Endothelial cell of umbilical vein (primary cell): ENCODE measurements at regions of chr7 and their contacts with region 1.

Region 1: DNA sequence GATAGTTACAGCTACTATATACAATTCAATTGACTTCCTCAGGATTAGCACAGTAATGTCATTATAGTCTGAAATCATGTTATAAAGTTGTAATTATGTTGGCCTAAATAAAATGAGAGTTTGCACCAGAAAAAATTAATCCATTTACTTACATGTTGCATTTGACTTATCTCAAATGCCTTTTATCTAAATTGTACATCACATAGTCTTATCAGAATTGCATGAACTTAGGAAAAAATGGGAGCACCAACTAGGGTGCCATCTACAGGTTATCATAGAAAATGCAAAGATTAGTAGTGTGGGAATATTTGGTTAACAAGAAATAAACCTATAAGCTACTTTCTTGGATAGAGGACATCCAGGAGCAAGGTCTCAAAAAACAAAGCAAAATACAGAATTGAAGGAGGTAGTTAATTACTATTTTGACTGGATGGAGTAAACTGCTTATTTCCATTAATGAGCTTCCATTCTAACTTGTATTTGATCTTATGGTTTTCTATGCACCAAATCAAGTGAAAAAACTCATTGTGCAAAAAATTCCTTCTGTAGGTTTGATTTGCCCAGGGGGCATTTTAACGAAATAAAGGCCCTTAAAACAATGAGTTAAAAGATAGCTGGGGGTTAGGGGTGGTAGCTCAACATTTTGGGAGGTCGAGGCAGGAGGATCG is 60.0 kb upstream of the ORC5 start:
- DNase-seq: peak; percentile 28
- H3K4me3 ChIP-seq: no peak overlapping the region
- H3K27ac ChIP-seq: no peak overlapping the region
- H3K4me1 ChIP-seq: no peaks in the 10 kb centered on the region
- H3K27me3 ChIP-seq: peaks cover 0 to 3% of the 10 kb centered on the region in 2 experiments
- CTCF ChIP-seq: peak; percentile 16 to 32
- POLR2A ChIP-seq: no peak

Region 2: GRCh38 chr7:104106108-104106905 is 161.5 kb before region 1 on chr7:
- CTCF ChIA-PET with region 1: interaction called, 12 read pairs
- POLR2A ChIA-PET with region 1: no interaction called
- dilution Hi-C with region 1: no loop called
- intact Hi-C with region 1: no loop called
- DNase-seq: peak; percentile 15
- H3K4me3 ChIP-seq: no peak overlapping the region
- H3K27ac ChIP-seq: no peak overlapping the region
- H3K4me1 ChIP-seq: no peaks in the 10 kb centered on the region
- H3K27me3 ChIP-seq: peaks cover 0 to 1% of the 10 kb centered on the region in 2 experiments
- CTCF ChIP-seq: peak in 1 of 2 donors; percentile 6
- POLR2A ChIP-seq: no peak

Region 3: GRCh38 chr7:104225451-104225850 is 42.4 kb before region 1 on chr7:
- CTCF ChIA-PET with region 1: interaction called, 98 read pairs
- POLR2A ChIA-PET with region 1: no interaction called
- dilution Hi-C with region 1: no loop called
- intact Hi-C with region 1: no loop called
- DNase-seq: no peak
- H3K4me3 ChIP-seq: no peak overlapping the region
- H3K27ac ChIP-seq: no peak overlapping the region
- H3K4me1 ChIP-seq: peaks cover 8% of the 10 kb centered on the region
- H3K27me3 ChIP-seq: peaks cover 0 to 5% of the 10 kb centered on the region in 2 experiments
- CTCF ChIP-seq: no peak
- POLR2A ChIP-seq: no peak

Region 4: DNA sequence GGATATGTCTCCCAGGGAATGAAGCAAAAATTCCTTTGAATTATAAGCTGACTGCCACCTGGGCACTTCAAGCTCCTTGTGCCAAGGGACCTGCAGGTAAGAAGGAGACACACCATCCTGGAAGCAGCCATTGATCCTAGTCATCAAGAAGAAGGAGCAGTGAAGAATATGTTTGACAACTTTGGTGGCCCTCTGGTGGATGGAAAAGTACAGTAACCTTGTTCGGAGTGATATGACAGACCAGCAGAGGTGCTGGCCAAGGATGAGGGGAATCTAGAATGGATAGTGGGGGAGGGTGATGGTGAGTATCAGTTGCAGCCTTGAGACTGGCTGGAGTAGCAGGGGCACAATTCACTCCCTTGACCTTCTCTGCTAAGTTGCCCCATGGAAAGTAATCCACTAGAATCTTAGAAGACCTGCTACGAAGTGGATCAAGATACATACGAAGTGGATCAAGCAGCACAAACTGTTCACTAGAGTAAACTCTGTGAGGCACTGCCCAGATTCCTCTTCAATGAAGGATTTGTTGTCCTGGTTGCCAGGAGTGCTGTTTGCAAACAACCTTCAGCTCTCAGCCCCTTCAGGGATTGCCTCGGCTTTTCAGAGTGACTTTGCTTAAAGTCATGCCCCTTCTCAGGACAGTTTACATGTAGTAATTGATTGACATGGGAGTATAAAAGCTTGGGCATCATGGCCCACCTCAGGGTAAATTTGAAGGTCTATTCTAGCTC is 15.3 kb before region 1 on chr7:
- CTCF ChIA-PET with region 1: interaction called, 12 read pairs
- POLR2A ChIA-PET with region 1: no interaction called
- dilution Hi-C with region 1: no loop called
- intact Hi-C with region 1: no loop called
- DNase-seq: no peak
- H3K4me3 ChIP-seq: no peak overlapping the region
- H3K27ac ChIP-seq: no peak overlapping the region
- H3K4me1 ChIP-seq: no peaks in the 10 kb centered on the region
- H3K27me3 ChIP-seq: peaks cover 3 to 4% of the 10 kb centered on the region in 2 experiments
- CTCF ChIP-seq: no peak
- POLR2A ChIP-seq: no peak

Region 5: GRCh38 chr7:104442481-104442880 is 174.6 kb after region 1 on chr7:
- CTCF ChIA-PET with region 1: no interaction called
- POLR2A ChIA-PET with region 1: no interaction called
- dilution Hi-C with region 1: no loop called
- intact Hi-C with region 1: no loop called
- DNase-seq: no peak
- H3K4me3 ChIP-seq: no peak overlapping the region
- H3K27ac ChIP-seq: no peak overlapping the region
- H3K4me1 ChIP-seq: no peaks in the 10 kb centered on the region
- H3K27me3 ChIP-seq: no peaks in the 10 kb centered on the region
- CTCF ChIP-seq: no peak
- POLR2A ChIP-seq: no peak

Region 6: DNA sequence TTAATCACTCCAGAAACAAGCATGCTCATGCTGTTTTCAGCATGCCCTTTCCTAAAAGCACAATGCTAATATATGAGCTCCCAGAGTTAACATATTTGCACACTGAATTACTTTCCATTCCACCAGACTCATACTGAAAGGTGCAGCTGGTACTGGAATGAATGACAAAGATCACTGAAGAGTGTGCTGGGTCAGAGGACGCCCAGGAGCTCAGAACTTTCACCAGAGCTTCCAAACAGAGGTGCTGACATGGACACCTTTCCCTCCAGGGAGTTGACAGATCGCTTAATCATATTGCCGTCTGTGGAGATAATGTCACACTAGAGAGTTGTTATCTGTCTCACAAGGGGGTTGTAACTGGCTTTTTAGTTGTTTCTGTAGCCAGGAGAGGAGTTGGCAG is 353.5 kb after region 1 on chr7:
- CTCF ChIA-PET with region 1: no interaction called
- POLR2A ChIA-PET with region 1: no interaction called
- dilution Hi-C with region 1: no loop called
- intact Hi-C with region 1: no loop called
- DNase-seq: no peak
- H3K4me3 ChIP-seq: no peak overlapping the region
- H3K27ac ChIP-seq: no peak overlapping the region
- H3K4me1 ChIP-seq: no peaks in the 10 kb centered on the region
- H3K27me3 ChIP-seq: no peaks in the 10 kb centered on the region
- CTCF ChIP-seq: no peak
- POLR2A ChIP-seq: no peak